ENCODE measurements at regions of chrX and their contacts with region 1.

Region 1: GRCh38 chrX:37926700-37927099 is 79.3 kb upstream of the DYNLT3 start:
- DNase-seq: no peak
- ATAC-seq: no peak
- H3K4me3 ChIP-seq: no peak overlapping the region
- H3K27ac ChIP-seq: no peak overlapping the region
- H3K4me1 ChIP-seq: no peaks in the 10 kb centered on the region
- H3K27me3 ChIP-seq: peaks cover 0 to 16% (median 0%) of the 10 kb centered on the region in 3 donors
- CTCF ChIP-seq: peak; percentile 35

Region 2: GRCh38 chrX:38166478-38167083 is 239.9 kb after region 1 on chrX:
- intact Hi-C with region 1: loop called in 1 of 2 experiments (anchors 10 kb)
- DNase-seq: no peak
- ATAC-seq: no peak
- H3K4me3 ChIP-seq: no peak overlapping the region
- H3K27ac ChIP-seq: no peak overlapping the region
- H3K4me1 ChIP-seq: no peaks in the 10 kb centered on the region
- H3K27me3 ChIP-seq: peaks cover 0 to 16% (median 0%) of the 10 kb centered on the region in 3 donors
- CTCF ChIP-seq: peak; percentile 62

Region 3: DNA sequence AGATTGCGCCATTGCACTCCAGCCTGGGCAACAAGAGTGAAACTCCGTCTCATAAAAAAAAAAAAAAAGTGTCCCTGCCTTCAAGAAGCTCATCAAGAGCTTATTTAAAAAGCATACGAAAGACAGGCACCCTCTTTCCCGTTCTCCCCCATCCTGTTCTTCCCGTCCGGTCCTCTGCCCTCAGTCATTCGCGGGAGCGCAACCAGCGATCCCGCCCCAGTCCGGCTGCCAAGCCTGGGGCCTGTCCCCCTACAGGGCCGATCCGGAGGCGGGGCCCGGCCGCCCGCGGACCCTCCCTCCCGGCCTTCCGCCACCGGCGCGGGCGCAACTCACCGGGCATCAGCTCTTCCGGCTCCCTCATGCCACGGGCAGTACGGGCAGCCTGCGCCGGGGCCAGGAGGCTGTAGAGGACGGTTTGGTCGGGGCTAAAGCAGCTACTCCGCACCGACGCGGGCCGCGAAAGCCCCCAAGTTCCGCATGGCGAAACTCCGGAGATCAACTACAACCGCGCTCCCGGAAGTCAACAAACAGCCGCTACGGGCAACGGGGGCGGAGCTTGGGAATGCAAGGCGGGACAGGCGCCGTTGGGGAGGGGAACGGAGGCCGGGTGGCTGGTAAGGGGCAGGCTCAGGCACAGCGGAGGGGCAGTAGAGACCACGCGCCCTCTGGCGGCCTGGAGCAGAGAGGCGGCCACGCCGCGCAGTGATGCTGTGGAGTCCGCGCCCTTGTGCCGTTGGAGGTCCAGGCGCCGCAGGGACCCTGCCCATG is 400.5 kb after region 1 on chrX and contains the start of gene RPGR:
- intact Hi-C with region 1: loop called in 1 of 2 experiments (anchors 2 kb)
- DNase-seq: peak; percentile 94 to 97
- ATAC-seq: peak; percentile 96 to 98 (median 97)
- H3K4me3 ChIP-seq: peak within 1 kb of the TSS; percentile 74
- H3K27ac ChIP-seq: peak within 1 kb of the TSS; percentile 78
- H3K4me1 ChIP-seq: no peaks in the 10 kb centered on the region
- H3K27me3 ChIP-seq: no peaks in the 10 kb centered on the region
- CTCF ChIP-seq: peak; percentile 69
- total RNA-seq, gene RPGR: 4.0 to 19.7 (median 7.7) TPM